Activated naive CD8-positive, alpha-beta T cell treated with anti-CD3 and anti-CD28 coated beads, Interleukin-2, amount 10 ng/mL, durations not matched to agents 7 days and 5 days (primary cell): ENCODE measurements at regions of chr11 and their contacts with region 1.

Region 1: GRCh38 chr11:63838678-63839507 is at the start of gene MARK2:
- DNase-seq: peak; percentile 100
- ATAC-seq: peak; percentile 89
- H3K4me3 Mint-ChIP-seq: peak within 1 kb of the TSS; percentile 93
- H3K27ac Mint-ChIP-seq: peak within 1 kb of the TSS; percentile 91
- H3K4me1 Mint-ChIP-seq: peaks cover 61% of the 10 kb centered on the region
- H3K27me3 Mint-ChIP-seq: no peaks in the 10 kb centered on the region
- total RNA-seq, gene MARK2: 60.6 to 62.3 TPM

Region 2: GRCh38 chr11:63862923-63863322 is 24.0 kb after region 1 on chr11:
- POLR2A ChIA-PET with region 1: interaction called, 10 read pairs
- DNase-seq: no peak
- ATAC-seq: peak; percentile 75
- H3K4me3 Mint-ChIP-seq: peak overlapping the region; percentile 2
- H3K27ac Mint-ChIP-seq: peak overlapping the region; percentile 84
- H3K4me1 Mint-ChIP-seq: peaks cover 45% of the 10 kb centered on the region
- H3K27me3 Mint-ChIP-seq: no peaks in the 10 kb centered on the region

Region 3: GRCh38 chr11:63870351-63871140 is 31.7 kb after region 1 on chr11:
- POLR2A ChIA-PET with region 1: interaction called, 11 read pairs
- DNase-seq: no peak
- ATAC-seq: no peak
- H3K4me3 Mint-ChIP-seq: peak overlapping the region; percentile 81
- H3K27ac Mint-ChIP-seq: peak overlapping the region; percentile 89
- H3K4me1 Mint-ChIP-seq: peaks cover 70% of the 10 kb centered on the region
- H3K27me3 Mint-ChIP-seq: no peaks in the 10 kb centered on the region

Region 4: GRCh38 chr11:63888170-63889086 is 49.5 kb after region 1 on chr11:
- POLR2A ChIA-PET with region 1: interaction called, 14 read pairs
- DNase-seq: peak; percentile 75
- ATAC-seq: peak; percentile 84
- H3K4me3 Mint-ChIP-seq: peak overlapping the region; percentile 98
- H3K27ac Mint-ChIP-seq: peak overlapping the region; percentile 97
- H3K4me1 Mint-ChIP-seq: peaks cover 58% of the 10 kb centered on the region
- H3K27me3 Mint-ChIP-seq: no peaks in the 10 kb centered on the region

Region 5: GRCh38 chr11:63945477-63946163 is 106.7 kb after region 1 on chr11:
- POLR2A ChIA-PET with region 1: interaction called, 22 read pairs
- DNase-seq: no peak
- ATAC-seq: peak; percentile 78
- H3K4me3 Mint-ChIP-seq: no peak overlapping the region
- H3K27ac Mint-ChIP-seq: no peak overlapping the region
- H3K4me1 Mint-ChIP-seq: peaks cover 10% of the 10 kb centered on the region
- H3K27me3 Mint-ChIP-seq: no peaks in the 10 kb centered on the region